GM12878 (cell line): ENCODE measurements at regions of chr6 and their contacts with region 1.

Region 1: GRCh38 chr6:797479-798077 is 104.6 kb upstream of the EXOC2 start:
- DNase-seq: no peak
- ATAC-seq: peak; percentile 64
- H3K4me3 ChIP-seq: no peak overlapping the region
- H3K27ac ChIP-seq: no peak overlapping the region
- H3K4me1 ChIP-seq: no peaks in the 10 kb centered on the region
- H3K27me3 ChIP-seq: peaks cover 3 to 9% of the 10 kb centered on the region in 2 experiments
- CTCF ChIP-seq: peak; percentile 58 to 62 (median 59)
- EP300 ChIP-seq: no peak
- POLR2A ChIP-seq: no peak
- RAD21 ChIP-seq: peak; percentile 89

Region 2: DNA sequence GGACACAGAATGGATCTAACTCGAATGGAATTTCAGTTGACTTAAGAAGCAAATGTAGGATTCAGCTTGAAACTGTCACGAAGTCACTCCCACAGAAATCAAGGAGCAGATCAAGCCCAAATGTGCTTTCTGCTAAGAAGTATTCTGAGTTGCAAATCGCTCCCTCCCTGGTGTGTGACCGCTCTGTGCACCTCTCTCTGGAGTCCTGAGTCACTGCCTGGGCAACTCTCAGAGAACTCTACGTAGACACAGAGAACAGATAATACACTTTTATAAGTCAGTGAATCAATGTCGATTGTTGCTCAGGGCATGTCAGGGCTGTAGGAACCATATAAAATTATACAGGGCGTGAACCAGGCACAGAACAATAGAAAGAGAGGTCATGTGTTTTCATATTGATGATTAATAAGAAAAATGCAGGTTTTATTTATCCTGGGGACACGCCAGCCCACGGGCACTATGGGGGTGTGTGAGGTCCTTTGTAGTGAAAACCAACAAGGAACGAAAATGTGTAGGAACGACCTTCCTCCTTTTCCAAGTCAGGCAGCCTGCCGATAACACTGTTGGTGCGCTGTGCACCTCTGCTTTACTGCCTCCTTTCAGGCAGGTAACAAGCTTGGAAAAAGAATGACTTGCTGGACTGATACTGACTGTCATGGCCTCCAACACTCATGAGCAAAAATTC is 266.2 kb after region 1 on chr6:
- CTCF ChIA-PET with region 1: no interaction called
- POLR2A ChIA-PET with region 1: no interaction called
- RAD21 ChIA-PET with region 1: no interaction called
- SMC1A ChIA-PET with region 1: no interaction called
- in situ Hi-C with region 1: no loop called
- intact Hi-C with region 1: no loop called
- DNase-seq: no peak
- ATAC-seq: no peak
- H3K4me3 ChIP-seq: no peak overlapping the region
- H3K27ac ChIP-seq: no peak overlapping the region
- H3K4me1 ChIP-seq: no peaks in the 10 kb centered on the region
- H3K27me3 ChIP-seq: peaks cover 2 to 4% of the 10 kb centered on the region in 2 experiments; a peak in 3 of 4 replicates
- CTCF ChIP-seq: no peak
- EP300 ChIP-seq: no peak
- POLR2A ChIP-seq: no peak
- RAD21 ChIP-seq: no peak

Region 3: DNA sequence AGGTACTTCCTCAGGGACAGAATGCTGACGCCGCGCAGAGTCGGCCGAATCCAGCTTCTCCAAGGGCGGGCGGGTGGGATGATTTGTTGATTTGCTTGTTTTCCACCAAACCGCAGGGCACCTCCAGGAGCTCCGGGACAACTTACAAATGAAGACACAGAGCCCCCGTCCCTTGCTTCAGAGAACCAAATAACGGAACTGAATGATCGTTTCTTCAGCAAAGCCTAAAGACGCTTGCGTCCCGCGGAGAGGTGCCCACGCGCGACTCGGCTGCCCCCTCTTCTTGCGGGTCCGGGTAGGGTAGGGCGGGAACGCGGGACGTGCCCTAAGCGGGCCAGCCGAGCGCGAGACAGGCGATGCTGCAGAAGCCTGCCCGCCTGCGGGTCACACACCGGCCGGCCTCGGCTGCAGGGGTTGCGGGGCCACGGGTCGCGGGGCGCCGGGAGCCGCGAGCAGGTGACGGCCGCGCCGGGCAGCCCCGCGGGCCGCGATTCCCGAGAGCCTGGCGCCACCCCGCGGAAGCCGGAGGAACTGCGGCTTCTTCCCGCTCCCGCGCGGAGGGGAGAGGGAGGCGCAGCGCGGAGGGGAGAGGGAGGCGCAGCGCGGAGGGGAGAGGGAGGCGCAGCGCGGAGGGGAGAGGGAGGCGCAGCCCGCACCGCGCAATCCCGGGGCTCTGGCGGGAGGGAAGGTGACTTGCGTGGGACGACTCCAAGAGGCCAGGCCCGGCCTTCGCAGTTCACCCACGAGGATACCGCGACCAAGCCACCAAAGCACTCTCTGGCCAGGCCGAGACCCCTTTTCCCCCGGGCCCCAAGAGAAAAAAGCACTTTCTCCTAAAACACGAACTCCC is 584.1 kb after region 1 on chr6:
- CTCF ChIA-PET with region 1: interaction called, 15 read pairs
- POLR2A ChIA-PET with region 1: interaction called, 4 read pairs
- RAD21 ChIA-PET with region 1: no interaction called
- SMC1A ChIA-PET with region 1: no interaction called
- in situ Hi-C with region 1: loop called (anchors 5 kb)
- intact Hi-C with region 1: loop called (anchors 2 kb)
- DNase-seq: no peak
- ATAC-seq: peak; percentile 90
- H3K4me3 ChIP-seq: no peak overlapping the region
- H3K27ac ChIP-seq: no peak overlapping the region
- H3K4me1 ChIP-seq: no peaks in the 10 kb centered on the region
- H3K27me3 ChIP-seq: peaks cover 25 to 48% of the 10 kb centered on the region in 2 experiments
- CTCF ChIP-seq: peak; percentile 64 to 75 (median 67)
- EP300 ChIP-seq: no peak
- POLR2A ChIP-seq: no peak
- RAD21 ChIP-seq: peak; percentile 81